ENCODE measurements at regions of chr9 and their contacts with region 1.

Region 1: GRCh38 chr9:127734747-127735529 is at the start of gene TOR2A:
- DNase-seq: peak; percentile 100
- H3K4me3 Mint-ChIP-seq: peak within 1 kb of the TSS; percentile 89
- H3K27ac Mint-ChIP-seq: peak within 1 kb of the TSS; percentile 94
- H3K4me1 Mint-ChIP-seq: peaks cover 10% of the 10 kb centered on the region
- H3K27me3 Mint-ChIP-seq: no peaks in the 10 kb centered on the region
- total RNA-seq, gene TOR2A: 20.4 and 21.4 TPM in 2 replicates

Region 2: DNA sequence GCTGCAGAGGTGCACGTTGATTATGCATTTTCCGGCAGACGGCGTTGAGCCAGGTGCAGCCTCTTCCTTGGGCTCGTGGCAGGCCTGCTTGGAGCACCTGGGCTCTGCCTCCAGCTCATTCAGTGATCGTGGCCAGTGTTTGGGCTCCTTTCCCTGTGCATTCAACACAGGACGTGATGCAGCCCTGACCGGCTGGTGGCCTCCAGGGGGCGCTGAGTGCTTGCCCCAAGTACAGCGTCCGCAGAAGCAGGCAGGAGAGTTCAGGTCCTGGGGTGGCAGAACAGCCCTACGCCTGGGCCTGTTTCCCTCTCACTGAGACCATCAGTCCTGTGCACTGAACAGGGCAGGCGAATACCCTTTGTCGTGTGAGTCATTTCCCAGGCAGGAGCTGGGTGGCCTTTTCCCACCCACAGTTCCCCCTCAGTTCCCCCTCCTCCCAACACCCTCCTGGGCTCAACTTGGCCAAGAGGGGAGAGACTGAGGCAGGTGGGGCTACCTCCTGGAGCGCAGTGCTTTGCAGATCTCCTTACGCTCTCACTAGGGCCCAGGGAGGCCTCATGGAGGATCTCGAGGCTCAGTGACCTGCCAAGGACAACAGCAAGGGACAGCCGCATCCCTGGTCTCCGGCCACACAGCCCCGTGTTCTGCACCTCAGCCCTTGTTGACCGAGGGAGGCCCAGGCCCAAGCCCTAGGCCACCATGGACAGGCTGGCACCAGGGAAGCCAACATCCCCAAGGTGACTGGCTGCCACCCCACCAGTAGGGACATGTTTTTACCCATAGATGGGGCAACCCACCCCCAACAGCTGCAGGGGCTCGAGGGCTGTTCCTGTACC is 230.8 kb before region 1 on chr9:
- intact Hi-C with region 1: loop called (anchors 1 kb)
- DNase-seq: peak; percentile 94
- H3K4me3 Mint-ChIP-seq: no peak overlapping the region
- H3K27ac Mint-ChIP-seq: no peak overlapping the region
- H3K4me1 Mint-ChIP-seq: peaks cover 2% of the 10 kb centered on the region
- H3K27me3 Mint-ChIP-seq: no peaks in the 10 kb centered on the region

Region 3: DNA sequence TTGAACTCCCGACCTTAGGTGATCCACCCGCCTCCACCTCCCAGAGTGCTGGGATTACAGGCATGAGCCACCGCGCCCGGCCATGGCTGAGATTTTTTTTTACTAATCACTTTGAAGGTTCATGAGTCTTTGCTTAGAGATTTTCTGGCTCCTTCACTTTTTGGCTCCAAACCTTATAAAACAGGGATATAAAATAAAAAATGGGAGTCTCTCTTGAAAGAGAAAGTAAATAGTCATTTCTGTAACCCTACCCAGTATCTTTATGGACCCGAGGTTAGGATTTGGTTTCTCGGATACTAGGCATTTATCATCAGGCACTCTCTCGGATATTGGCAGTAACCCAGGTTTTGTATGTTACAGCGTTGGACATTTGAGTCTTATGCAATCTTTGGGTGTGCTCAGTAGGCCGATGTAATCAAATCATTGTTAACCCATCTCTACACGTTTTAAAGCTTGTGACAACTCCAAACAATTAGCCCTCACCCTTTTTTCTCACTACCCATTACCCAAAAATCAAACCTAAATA is 97.6 kb before region 1 on chr9:
- intact Hi-C with region 1: no loop called
- DNase-seq: no peak
- H3K4me3 Mint-ChIP-seq: no peak overlapping the region
- H3K27ac Mint-ChIP-seq: no peak overlapping the region
- H3K4me1 Mint-ChIP-seq: peaks cover 10% of the 10 kb centered on the region
- H3K27me3 Mint-ChIP-seq: peaks cover 6% of the 10 kb centered on the region

Region 4: DNA sequence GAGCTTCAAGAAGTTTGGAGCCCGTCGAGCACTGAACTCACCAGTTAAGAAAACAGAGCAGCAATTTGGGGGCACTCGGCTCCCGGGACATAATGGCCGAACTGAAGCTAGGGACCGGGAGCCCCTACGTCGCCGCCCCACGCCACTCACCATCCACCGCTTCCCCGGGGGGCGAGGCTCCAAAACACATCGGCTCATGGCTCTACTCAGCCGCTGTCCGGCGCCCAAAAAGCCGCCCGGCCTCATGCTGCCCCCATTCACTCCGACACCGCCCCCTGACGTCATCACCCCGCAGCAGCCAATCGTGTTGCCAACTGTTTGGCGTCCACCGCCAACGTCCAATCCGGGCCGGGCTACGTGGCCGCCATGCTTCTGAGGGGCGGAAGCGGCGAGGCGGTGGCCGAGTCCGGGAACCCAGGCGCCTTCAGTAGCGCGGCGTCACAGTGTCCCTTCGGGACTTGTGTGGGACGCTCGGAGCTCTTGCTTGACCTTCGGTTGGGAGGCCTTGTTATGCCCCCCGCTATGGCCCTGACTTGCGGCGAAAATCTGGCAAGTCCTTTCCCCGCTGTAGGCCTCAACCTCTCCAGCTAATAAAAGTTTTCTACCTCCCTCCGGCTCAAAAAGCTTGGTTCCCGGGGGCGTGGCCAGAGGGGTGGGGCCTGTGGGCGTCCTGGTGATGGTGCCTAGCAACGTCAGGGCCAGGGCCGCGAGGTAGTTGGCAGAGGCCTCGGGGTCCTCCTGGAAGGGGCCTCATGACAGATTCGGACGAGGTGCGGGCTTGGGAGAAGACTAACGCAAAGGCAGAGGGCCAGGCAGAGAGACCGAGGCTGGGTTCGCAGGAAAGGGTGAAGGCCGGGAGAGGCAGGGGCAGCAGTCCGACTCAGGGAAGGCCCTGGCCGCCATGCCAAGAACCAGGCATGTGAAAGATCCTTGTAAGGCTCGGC is 19.3 kb before region 1 on chr9 and contains the starts of genes PTRH1 and TTC16:
- intact Hi-C with region 1: loop called (anchors 1 kb)
- DNase-seq: peak; percentile 100
- H3K4me3 Mint-ChIP-seq: peak within 1 kb of the TSS; percentile 100
- H3K27ac Mint-ChIP-seq: peak within 1 kb of the TSS; percentile 99
- H3K4me1 Mint-ChIP-seq: peaks cover 27% of the 10 kb centered on the region
- H3K27me3 Mint-ChIP-seq: peaks cover 2% of the 10 kb centered on the region
- total RNA-seq, gene PTRH1: 22.8 TPM in 2 replicates
- total RNA-seq, gene TTC16: not detected in 2 replicates

Region 5: DNA sequence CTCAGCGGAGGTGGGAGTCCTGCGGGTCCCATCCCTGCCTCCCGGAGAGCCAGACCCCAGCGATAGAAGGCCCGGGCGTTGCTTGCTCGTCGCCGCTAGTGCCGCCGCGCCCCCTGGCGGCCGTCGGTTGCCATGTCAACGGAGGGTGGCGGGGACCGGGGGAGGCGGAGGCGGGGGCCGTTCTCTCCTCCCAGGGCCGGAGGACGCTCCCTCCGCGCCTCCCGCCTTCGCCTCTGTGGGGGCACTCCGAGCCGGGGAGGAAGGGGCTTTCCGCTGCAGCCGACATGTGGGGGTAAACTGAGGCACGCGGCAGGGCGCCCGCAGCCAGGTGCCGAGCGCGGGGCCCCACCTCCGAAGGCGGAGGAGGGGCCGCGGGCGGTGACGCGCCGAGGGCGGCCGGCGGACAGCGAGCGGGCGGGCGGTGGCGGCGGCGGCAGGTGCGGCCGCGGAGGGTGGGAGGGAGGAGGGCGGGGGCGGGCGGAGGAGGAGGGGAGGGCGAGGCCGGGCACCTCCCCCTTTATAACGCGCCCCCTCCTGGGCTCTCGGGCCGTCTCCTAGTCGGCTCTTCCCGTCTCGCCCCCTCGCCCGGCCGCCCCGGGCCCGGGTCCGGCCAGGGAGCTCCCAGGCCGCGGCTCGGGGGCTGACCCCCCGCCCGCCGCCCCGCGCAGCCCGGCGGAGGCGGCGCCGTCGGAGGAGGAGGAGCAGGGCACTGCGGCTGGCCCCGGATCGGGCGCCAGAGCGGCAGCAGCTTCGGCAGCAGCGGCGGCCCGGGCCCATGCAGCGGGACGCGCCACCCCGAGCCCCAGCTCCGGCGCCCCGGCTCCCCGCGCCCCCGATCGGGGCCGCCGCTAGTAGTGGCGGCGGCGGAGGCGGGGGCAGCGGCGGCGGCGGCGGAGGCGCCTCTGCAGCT is 50.3 kb after region 1 on chr9:
- intact Hi-C with region 1: loop called (anchors 1 kb)
- DNase-seq: peak; percentile 97
- H3K4me3 Mint-ChIP-seq: peak overlapping the region; percentile 99
- H3K27ac Mint-ChIP-seq: peak overlapping the region; percentile 98
- H3K4me1 Mint-ChIP-seq: peaks cover 57% of the 10 kb centered on the region
- H3K27me3 Mint-ChIP-seq: no peaks in the 10 kb centered on the region

Region 6: GRCh38 chr9:127869310-127870152 is 134.6 kb after region 1 on chr9:
- intact Hi-C with region 1: loop called (anchors 1 kb)
- DNase-seq: peak; percentile 95
- H3K4me3 Mint-ChIP-seq: no peak overlapping the region
- H3K27ac Mint-ChIP-seq: no peak overlapping the region
- H3K4me1 Mint-ChIP-seq: peaks cover 11% of the 10 kb centered on the region
- H3K27me3 Mint-ChIP-seq: no peaks in the 10 kb centered on the region

Region 7: DNA sequence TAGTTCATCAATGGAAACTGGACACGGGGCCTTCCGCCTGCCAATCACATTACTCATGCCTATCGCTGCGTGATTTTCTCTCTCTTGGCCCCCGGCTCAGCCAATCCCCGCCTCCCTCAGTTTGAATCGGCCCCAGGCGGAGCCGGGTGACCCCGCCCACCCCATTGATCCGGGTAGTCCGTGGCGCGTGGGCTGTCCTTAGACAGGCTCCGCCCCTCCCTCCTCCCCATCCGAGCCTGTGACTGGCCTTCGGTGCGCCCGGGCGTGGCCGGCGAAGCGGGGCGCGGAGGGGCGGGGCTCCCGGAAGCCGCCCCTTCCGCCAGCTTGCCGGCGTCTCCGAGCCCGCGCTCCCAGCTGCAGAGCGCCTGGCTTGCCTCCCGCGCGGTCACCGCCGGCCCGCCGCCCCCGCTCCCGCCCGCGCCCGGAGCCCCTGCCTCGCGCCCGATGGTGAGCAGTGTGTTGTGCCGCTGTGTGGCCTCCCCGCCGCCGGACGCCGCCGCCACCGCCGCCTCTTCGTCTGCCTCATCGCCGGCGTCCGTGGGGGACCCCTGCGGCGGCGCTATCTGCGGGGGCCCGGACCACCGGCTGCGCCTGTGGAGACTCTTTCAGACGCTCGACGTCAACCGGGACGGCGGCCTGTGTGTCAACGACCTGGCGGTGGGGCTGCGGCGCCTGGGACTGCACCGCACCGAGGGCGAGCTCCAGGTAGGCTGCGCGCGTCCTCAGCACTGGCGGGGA is 333.1 kb after region 1 on chr9 and contains the start of gene SLC25A25:
- intact Hi-C with region 1: loop called (anchors 1 kb)
- DNase-seq: peak; percentile 100
- H3K4me3 Mint-ChIP-seq: peak within 1 kb of the TSS; percentile 93
- H3K27ac Mint-ChIP-seq: peak within 1 kb of the TSS; percentile 84
- H3K4me1 Mint-ChIP-seq: peaks cover 43% of the 10 kb centered on the region
- H3K27me3 Mint-ChIP-seq: no peaks in the 10 kb centered on the region
- total RNA-seq, gene SLC25A25: 12.2 and 14.0 TPM in 2 replicates

Measured in activated CD4-positive, alpha-beta T cell treated with anti-CD3 and anti-CD28 coated beads, Interleukin-2, amount 10 ng/mL, durations not matched to agents 24 days and 14 days (primary cell).